ENCODE measurements at regions of chr19 and their contacts with region 1.

Region 1: DNA sequence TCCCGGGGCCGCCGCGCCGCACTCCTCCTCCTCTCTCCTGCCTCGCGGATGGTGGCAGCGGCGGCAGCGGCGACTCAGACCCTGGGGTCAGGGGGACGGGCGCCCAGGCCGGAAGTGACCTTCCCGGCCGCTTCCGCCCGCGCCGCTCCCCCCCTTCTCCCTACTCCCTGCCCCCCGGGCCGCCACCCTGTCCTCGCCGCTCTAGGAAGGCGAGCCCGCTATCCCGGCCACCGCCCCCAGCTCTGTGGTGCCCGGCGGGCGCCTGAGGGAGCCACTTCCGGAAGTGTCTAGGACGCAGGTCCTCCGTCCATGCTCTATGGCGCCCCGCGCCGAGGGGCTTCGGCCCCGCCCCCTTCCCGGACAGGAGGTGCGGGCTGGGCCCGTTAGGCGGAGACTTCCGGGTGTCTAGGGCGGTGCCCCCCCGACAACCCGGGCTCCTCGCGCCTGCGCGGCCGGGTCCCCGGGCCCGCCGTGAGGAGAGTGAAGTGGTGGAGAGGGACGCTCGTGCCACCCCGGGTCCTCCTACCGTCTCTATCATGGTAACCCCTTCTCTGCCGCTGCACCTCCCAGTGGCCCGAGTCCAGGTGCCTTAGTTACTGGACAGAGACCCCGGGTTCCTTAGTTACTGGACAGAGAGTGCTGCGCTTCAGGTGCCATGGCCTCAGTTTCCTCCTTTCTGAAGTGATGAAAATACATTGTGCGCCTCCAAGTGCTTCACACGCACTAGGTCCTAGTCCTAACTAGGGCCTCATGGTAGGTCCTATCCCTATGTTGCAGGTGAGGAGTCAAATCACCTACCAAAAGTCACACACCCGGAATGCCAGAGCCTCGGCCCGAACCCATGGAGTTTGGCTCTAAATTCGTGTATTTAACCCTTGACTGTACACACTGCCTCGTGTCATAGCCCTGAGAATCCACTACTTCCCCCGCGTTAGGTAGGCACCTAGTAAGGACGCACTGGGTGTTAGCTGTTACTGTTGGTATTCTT is at the start of gene ZNF787:
- DNase-seq: peak; percentile 99
- ATAC-seq: peak; percentile 94
- total RNA-seq, gene ZNF787: 33.9 TPM

Region 2: GRCh38 chr19:56140583-56141416 is 19.3 kb after region 1 on chr19 and contains the start of gene ZNF444:
- intact Hi-C with region 1: loop called (anchors 2 kb)
- DNase-seq: peak; percentile 99
- ATAC-seq: peak; percentile 96
- total RNA-seq, gene ZNF444: 26.7 TPM